Caco-2 (cell line): ENCODE measurements at regions of chr2 and their contacts with region 1.

Region 1: GRCh38 chr2:204691911-204692510 is 146.7 kb downstream of the PARD3B start:
- DNase-seq: peak; percentile 79 to 81
- H3K4me3 ChIP-seq: no peak overlapping the region
- H3K4me3 Mint-ChIP-seq: no peak overlapping the region
- H3K27ac Mint-ChIP-seq: no peak overlapping the region
- H3K4me1 ChIP-seq: peaks cover 20% of the 10 kb centered on the region
- H3K4me1 Mint-ChIP-seq: peaks cover 29% of the 10 kb centered on the region
- H3K27me3 ChIP-seq: no peaks in the 10 kb centered on the region
- H3K27me3 Mint-ChIP-seq: no peaks in the 10 kb centered on the region
- CTCF ChIP-seq: peak; percentile 61 to 92

Region 2: DNA sequence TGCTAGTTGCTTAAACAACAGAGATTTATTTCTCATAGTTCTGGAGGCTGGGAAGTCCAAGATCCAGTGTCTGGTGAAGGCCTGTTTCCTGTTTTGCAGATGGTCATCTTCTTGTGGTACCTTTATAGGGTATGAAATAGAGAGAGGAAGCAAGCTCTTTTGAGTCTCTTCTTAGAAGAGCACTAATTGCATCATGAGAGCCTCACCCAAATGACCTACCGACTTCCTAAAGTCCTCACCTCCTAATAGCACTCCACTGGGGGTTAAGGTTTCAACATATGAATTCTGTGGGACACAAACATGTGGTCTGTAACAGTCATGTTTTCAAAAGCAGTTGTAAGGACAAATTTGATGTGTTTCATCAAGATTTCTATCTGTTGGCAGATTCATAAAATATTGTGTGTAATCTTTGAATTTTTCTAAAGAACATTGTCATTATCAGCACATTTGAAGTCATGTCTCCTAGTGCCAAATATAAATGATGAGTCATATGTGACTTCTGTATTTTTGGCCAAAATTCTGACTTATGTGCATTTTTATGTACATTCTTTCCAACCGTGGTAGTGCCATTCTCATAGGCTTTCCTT is 940.2 kb before region 1 on chr2:
- CTCF ChIA-PET with region 1: no interaction called
- POLR2A ChIA-PET with region 1: no interaction called
- intact Hi-C with region 1: no loop called
- DNase-seq: no peak
- H3K4me3 ChIP-seq: no peak overlapping the region
- H3K4me3 Mint-ChIP-seq: no peak overlapping the region
- H3K27ac Mint-ChIP-seq: no peak overlapping the region
- H3K4me1 ChIP-seq: no peaks in the 10 kb centered on the region
- H3K4me1 Mint-ChIP-seq: no peaks in the 10 kb centered on the region
- H3K27me3 ChIP-seq: no peaks in the 10 kb centered on the region
- H3K27me3 Mint-ChIP-seq: no peaks in the 10 kb centered on the region
- CTCF ChIP-seq: no peak

Region 3: GRCh38 chr2:204574486-204574885 is 117.5 kb before region 1 on chr2:
- CTCF ChIA-PET with region 1: no interaction called
- POLR2A ChIA-PET with region 1: no interaction called
- intact Hi-C with region 1: loop called (anchors 5 kb)
- DNase-seq: no peak
- H3K4me3 ChIP-seq: no peak overlapping the region
- H3K4me3 Mint-ChIP-seq: no peak overlapping the region
- H3K27ac Mint-ChIP-seq: no peak overlapping the region
- H3K4me1 ChIP-seq: peaks cover 6% of the 10 kb centered on the region; the same call in 1 of the 2 replicates
- H3K4me1 Mint-ChIP-seq: peaks cover 42% of the 10 kb centered on the region
- H3K27me3 ChIP-seq: no peaks in the 10 kb centered on the region
- H3K27me3 Mint-ChIP-seq: no peaks in the 10 kb centered on the region
- CTCF ChIP-seq: no peak